Activated CD4-positive, alpha-beta T cell treated with anti-CD3 and anti-CD28 coated beads, Interleukin-2, amount 10 ng/mL, durations not matched to agents 24 days and 14 days (primary cell): ENCODE measurements at regions of chr6 and their contacts with region 1.

Region 1: GRCh38 chr6:158270389-158271127 is 41.7 kb upstream of the TULP4 start:
- DNase-seq: no peak
- H3K4me3 Mint-ChIP-seq: peak overlapping the region; percentile 55
- H3K27ac Mint-ChIP-seq: peak overlapping the region; percentile 53
- H3K4me1 Mint-ChIP-seq: peaks cover 20% of the 10 kb centered on the region
- H3K27me3 Mint-ChIP-seq: no peaks in the 10 kb centered on the region

Region 2: DNA sequence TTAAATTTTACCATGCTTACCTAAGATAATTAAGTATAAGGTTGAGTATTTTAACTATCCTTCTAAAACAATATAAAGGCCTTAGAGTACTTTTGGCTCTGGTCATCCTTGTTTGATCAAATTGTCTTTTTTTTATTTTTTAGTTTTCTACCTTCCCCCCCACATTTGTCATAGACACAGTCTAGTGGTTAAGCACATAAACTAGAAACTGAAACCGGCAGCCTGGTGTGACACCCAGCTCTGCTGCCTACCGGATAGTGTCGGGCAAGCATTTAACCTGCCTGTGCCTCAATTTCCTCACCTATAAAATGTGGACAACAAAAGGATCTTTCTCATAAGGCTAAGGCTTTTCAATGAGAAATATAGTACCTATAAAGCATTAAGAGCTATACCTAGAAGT is 20.1 kb after region 1 on chr6:
- intact Hi-C with region 1: loop called (anchors 1 kb)
- DNase-seq: peak; percentile 88
- H3K4me3 Mint-ChIP-seq: peak overlapping the region; percentile 69
- H3K27ac Mint-ChIP-seq: peak overlapping the region; percentile 76
- H3K4me1 Mint-ChIP-seq: peaks cover 37% of the 10 kb centered on the region
- H3K27me3 Mint-ChIP-seq: no peaks in the 10 kb centered on the region